Endothelial cell of umbilical vein (primary cell): ENCODE measurements at regions of chr1 and their contacts with region 1.

Region 1: DNA sequence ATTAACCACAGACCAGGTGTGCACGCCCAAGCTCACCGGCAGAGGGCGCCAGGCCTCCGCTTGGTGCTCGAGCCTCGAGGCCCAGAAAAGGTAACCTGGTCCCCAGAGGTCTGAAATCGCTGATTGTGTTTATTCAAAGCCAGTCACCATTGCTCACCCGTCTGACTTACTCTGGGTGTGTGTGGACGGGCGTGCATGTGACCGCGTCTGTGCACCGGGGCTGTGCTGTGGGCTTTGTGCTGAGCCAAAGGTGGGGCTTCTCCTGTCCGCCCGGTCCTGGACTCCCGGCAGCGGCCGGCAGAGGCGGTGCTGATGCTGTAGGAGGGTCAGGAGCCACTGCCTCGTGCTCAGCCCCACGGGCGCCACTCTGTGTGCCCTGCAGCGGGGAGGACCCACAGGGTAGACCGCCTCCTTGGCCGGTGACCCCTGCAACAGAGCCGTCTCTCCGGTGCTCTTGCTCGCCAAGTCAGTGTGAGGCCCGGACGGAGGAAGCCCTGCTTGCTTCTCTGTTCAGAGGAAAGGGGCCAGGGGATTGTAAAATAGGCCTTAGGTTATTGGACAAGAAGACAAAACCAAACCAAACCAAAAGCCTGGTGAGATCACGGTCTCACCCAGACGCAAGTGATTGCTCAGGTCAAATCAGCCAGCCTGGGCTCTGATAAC is 32.0 kb upstream of the BTG2 start:
- DNase-seq: peak; percentile 76
- H3K4me3 ChIP-seq: no peak overlapping the region
- H3K27ac ChIP-seq: no peak overlapping the region
- H3K4me1 ChIP-seq: peaks cover 5% of the 10 kb centered on the region
- H3K27me3 ChIP-seq: peaks cover 4 to 6% of the 10 kb centered on the region in 2 experiments
- CTCF ChIP-seq: peak; percentile 96 to 97
- POLR2A ChIP-seq: no peak

Region 2: GRCh38 chr1:203038891-203039608 is 234.3 kb before region 1 on chr1:
- CTCF ChIA-PET with region 1: interaction called, 207 read pairs
- POLR2A ChIA-PET with region 1: no interaction called
- dilution Hi-C with region 1: no loop called
- intact Hi-C with region 1: loop called (anchors 1 kb)
- DNase-seq: peak; percentile 57
- H3K4me3 ChIP-seq: no peak overlapping the region
- H3K27ac ChIP-seq: no peak overlapping the region
- H3K4me1 ChIP-seq: no peaks in the 10 kb centered on the region
- H3K27me3 ChIP-seq: peaks cover 0 to 18% of the 10 kb centered on the region in 2 experiments
- CTCF ChIP-seq: peak; percentile 86
- POLR2A ChIP-seq: no peak

Region 3: DNA sequence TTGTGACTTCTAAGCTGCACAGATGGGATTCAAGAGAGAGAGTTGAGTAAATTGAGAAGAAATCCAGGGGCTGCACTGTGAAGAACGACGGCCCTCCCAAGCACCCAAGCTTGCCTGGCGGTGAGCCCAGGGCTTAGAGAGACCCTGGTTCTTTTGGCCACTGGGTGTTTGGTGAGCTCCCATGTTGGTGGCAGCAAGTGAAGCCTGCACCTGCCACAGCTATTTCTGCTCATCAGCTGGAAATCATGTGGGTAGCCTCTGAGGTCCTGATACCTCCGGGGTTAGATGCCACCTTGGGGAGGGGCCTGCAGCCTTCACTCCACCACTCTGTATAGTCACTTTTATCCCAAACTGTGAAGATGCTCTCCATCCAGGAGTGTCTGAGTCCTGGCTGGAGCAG is 25.8 kb after region 1 on chr1:
- CTCF ChIA-PET with region 1: interaction called, 17 read pairs
- POLR2A ChIA-PET with region 1: no interaction called
- dilution Hi-C with region 1: no loop called
- intact Hi-C with region 1: no loop called
- DNase-seq: no peak
- H3K4me3 ChIP-seq: no peak overlapping the region
- H3K27ac ChIP-seq: no peak overlapping the region
- H3K4me1 ChIP-seq: no peaks in the 10 kb centered on the region
- H3K27me3 ChIP-seq: peaks cover 11 to 24% of the 10 kb centered on the region in 2 experiments
- CTCF ChIP-seq: no peak
- POLR2A ChIP-seq: no peak

Region 4: DNA sequence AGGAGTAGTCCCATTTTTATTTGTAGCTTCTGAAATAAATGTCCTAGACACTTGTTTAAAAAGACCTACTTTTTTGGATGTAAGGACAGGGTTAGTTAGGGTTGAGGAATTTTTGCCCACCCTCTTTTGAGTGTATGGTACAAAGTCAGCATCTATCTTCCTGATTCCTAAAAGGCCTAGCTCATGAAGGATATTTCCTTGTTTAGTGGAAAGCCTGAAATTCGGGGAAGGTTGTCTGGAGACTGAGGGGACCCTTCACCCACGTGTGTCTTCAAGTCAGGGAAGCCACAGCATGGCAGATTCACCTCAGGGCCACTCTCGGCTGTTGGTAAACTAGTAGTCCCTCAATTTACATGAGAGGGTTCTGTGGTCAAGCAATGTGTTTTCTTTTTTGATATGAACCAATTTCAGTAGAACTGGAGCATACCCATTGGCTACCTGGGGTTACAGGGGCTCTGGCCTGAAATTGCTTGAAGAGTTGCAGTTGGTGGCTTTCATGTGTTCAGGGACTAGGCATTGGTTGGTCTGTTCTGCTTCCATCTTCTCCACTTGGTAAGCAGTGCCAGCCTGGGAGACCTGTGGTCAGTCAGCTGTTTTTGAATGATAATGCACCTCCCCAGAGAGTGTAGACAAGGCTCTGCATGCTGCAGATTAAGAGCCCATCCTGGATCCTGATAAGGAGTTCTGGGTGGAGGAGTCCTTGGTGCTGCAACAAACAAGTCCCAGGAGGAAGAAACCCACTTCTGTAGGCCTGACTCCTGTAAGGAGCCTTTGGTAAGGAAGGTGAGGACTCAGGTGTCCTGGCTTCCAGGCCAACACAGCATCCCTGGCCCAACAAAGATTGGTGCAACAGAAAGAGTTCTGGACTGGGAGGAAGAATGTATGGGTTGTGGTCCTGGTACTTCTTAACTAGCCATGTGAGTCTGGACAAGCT is 38.3 kb after region 1 on chr1:
- CTCF ChIA-PET with region 1: interaction called, 88 read pairs
- POLR2A ChIA-PET with region 1: interaction called, 5 read pairs
- dilution Hi-C with region 1: no loop called
- intact Hi-C with region 1: no loop called
- DNase-seq: no peak
- H3K4me3 ChIP-seq: no peak overlapping the region
- H3K27ac ChIP-seq: no peak overlapping the region
- H3K4me1 ChIP-seq: peaks cover 13% of the 10 kb centered on the region
- H3K27me3 ChIP-seq: no peaks in the 10 kb centered on the region
- CTCF ChIP-seq: no peak
- POLR2A ChIP-seq: no peak

Region 5: GRCh38 chr1:203424861-203425662 is 151.7 kb after region 1 on chr1:
- CTCF ChIA-PET with region 1: no interaction called
- POLR2A ChIA-PET with region 1: no interaction called
- dilution Hi-C with region 1: no loop called
- intact Hi-C with region 1: no loop called
- DNase-seq: no peak
- H3K4me3 ChIP-seq: no peak overlapping the region
- H3K27ac ChIP-seq: no peak overlapping the region
- H3K4me1 ChIP-seq: no peaks in the 10 kb centered on the region
- H3K27me3 ChIP-seq: peaks cover 16 to 21% of the 10 kb centered on the region in 2 experiments
- CTCF ChIP-seq: no peak
- POLR2A ChIP-seq: no peak

Region 6: GRCh38 chr1:203440771-203441170 is 167.4 kb after region 1 on chr1:
- CTCF ChIA-PET with region 1: interaction called, 37 read pairs
- POLR2A ChIA-PET with region 1: no interaction called
- dilution Hi-C with region 1: no loop called
- intact Hi-C with region 1: loop called (anchors 2 kb)
- DNase-seq: peak; percentile 65
- H3K4me3 ChIP-seq: no peak overlapping the region
- H3K27ac ChIP-seq: no peak overlapping the region
- H3K4me1 ChIP-seq: peaks cover 5% of the 10 kb centered on the region
- H3K27me3 ChIP-seq: peaks cover 20 to 39% of the 10 kb centered on the region in 2 experiments
- CTCF ChIP-seq: peak; percentile 27 to 62
- POLR2A ChIP-seq: no peak

Region 7: GRCh38 chr1:204927673-204928641 is 1654.6 kb after region 1 on chr1:
- CTCF ChIA-PET with region 1: no interaction called
- POLR2A ChIA-PET with region 1: no interaction called
- dilution Hi-C with region 1: no loop called
- intact Hi-C with region 1: no loop called
- DNase-seq: no peak
- H3K4me3 ChIP-seq: no peak overlapping the region
- H3K27ac ChIP-seq: no peak overlapping the region
- H3K4me1 ChIP-seq: no peaks in the 10 kb centered on the region
- H3K27me3 ChIP-seq: peaks cover 2 to 3% of the 10 kb centered on the region in 2 experiments
- CTCF ChIP-seq: no peak
- POLR2A ChIP-seq: no peak